Mammary epithelial cell (primary cell): ENCODE measurements at regions of chr20 and their contacts with region 1.

Region 1: DNA sequence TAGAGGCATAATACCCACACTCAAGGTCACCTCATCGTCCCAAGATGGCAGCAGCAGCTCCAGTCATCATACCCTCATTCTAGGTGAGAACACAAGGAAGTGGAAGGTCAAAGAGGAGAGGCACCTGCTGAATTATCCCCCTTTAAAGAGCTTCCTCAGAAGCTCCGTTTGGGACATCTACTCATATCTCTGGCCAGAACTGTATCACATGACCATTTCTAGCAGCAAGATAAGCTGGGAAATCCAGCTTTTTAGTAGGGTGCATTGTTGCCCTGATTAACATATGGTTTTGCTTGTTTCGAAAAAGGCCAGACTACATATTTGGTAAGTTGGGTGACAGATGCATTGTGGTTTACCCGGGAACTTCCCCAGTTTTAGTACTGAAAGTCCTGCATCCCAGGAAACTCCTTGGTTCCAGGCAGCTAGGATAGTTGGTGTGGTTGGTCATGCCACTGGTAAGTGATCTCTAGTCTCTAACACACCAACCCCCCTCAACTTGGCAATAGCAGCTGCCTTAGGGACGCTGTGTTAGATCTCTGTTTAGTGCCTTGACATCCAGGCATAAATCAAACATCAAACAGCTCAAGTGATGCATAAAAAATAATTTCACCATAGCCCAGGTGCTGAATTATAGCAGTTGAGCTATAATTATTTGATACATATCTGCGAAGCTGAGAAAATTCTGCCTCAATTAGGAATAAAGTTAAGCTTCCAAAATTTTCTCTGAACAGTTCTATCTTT is 216.4 kb downstream of the TFAP2C start:
- DNase-seq: no peak
- H3K4me3 ChIP-seq: no peak overlapping the region
- H3K27ac ChIP-seq: no peak overlapping the region
- H3K4me1 ChIP-seq: no peaks in the 10 kb centered on the region
- H3K27me3 ChIP-seq: no peaks in the 10 kb centered on the region
- CTCF ChIP-seq: no peak

Region 2: DNA sequence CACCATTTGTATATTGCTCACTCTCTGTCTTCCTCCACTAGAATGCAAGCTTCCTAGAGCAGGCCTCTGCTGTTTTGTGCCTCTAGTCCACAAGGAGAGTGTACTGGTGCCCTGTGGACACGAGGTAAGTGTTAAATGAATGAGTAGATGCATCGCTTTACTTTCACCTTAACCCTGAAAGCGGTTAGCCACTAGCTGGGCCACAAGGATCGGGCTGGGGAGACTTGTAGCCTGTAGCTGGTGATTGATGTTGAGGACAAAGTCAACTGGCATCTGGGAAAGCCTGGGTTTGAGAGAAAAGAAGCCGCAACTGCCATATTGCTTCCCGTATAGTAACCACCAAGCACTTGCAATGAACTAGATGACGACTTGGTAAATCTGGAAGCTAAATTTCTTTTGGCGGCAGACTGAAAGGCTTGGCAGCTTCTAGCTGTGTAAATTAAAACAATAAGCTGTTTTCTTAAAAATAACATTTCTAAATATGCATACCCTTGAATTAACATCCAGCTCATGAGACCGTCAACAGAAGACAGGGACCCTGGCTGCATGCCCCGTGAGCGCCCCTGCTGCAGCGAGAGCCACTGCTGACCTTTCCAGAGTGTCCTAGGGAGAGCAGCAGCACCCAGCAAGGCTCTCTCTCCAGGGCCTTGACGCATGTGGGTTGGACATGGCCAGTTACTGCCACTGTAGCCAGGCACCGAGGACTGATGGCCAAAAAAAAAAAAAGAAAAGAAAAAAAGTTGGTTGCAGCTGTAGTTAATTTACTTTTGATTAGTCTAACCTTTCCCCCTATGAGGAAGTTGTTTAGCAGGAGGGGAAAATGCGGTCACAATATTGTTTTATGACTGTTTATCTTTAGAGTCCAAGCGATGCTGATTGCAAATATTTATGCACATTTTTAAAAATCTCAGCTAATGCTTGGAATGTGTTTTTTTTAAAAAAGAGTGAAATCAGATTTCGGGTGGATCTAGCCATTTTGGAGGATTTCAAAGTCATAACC is 98.7 kb after region 1 on chr20:
- CTCF ChIA-PET with region 1: interaction called, 5 read pairs
- dilution Hi-C with region 1: loop called (anchors 5 kb)
- in situ Hi-C with region 1: no loop called
- intact Hi-C with region 1: no loop called
- DNase-seq: no peak
- H3K4me3 ChIP-seq: no peak overlapping the region
- H3K27ac ChIP-seq: no peak overlapping the region
- H3K4me1 ChIP-seq: no peaks in the 10 kb centered on the region
- H3K27me3 ChIP-seq: peaks cover 2% of the 10 kb centered on the region
- CTCF ChIP-seq: no peak